T-cell (primary cell): ENCODE measurements at regions of chr17 and their contacts with region 1.

Region 1: GRCh38 chr17:51056813-51057510 is 63.7 kb downstream of the SPAG9 start:
- DNase-seq: peak in 16 of 35 experiments; percentile 6 to 61 (median 19)
- ATAC-seq: peak in 3 of 4 experiments; percentile 43 to 65 (median 44)
- H3K4me3 ChIP-seq: no peak overlapping the region
- H3K4me3 Mint-ChIP-seq: no peak overlapping the region
- H3K27ac ChIP-seq: no peak overlapping the region
- H3K27ac Mint-ChIP-seq: peak overlapping the region; percentile 12 to 73
- H3K4me1 ChIP-seq: no peaks in the 10 kb centered on the region
- H3K4me1 Mint-ChIP-seq: peaks cover 0 to 20% (median 19%) of the 10 kb centered on the region in 3 donors
- H3K27me3 ChIP-seq: no peaks in the 10 kb centered on the region
- H3K27me3 Mint-ChIP-seq: no peaks in the 10 kb centered on the region

Region 2: DNA sequence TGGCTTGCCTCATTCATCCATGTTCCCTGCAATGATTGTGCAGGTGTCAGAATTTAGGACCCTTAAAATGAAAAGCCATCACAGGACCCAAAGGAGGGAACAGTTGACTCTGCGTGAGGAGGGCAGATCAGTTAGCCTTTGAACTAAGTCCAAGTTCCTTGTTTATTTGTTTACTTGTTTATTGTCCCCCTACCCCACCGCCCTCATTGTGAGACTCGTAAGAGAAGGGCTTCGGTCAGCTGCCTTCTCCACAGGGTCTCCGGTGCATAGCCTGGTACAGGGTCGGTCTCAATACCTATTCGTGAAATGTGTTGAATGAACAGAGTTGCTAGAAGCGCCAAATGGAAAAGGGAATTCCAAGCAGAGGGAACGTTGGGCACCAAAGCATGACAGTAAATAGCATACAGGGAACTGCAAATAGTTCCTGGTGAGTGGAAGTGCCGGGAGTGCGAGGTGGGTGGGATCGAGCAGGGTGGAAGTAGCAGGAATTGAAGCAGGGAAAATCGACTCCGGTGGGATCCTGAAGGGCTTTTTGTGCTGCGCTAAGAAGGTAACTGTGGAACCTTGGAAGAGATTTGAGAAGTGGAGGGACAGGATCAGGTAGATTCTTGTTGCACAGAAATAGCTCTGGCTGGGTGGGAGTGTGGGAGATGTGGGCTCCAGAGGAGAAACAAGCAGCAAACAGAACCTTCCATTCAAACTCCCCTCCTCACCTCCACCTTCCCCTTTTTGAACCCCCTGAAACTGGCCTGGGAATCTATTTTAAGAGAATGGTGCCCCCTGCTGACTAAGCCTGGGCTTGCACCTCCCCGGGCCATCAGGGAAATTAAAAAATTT is 1361.9 kb before region 1 on chr17:
- CTCF ChIA-PET with region 1: no interaction called
- POLR2A ChIA-PET with region 1: no interaction called
- DNase-seq: peak in 34 of 35 experiments; percentile 22 to 79 (median 62)
- ATAC-seq: peak; percentile 36 to 69 (median 56)
- H3K4me3 ChIP-seq: no peak overlapping the region
- H3K4me3 Mint-ChIP-seq: peak overlapping the region in 1 of 3 donors; percentile 37
- H3K27ac ChIP-seq: peak overlapping the region; percentile 58
- H3K27ac Mint-ChIP-seq: peak overlapping the region; percentile 71 to 82
- H3K4me1 ChIP-seq: peaks cover 19 to 33% of the 10 kb centered on the region in 2 experiments
- H3K4me1 Mint-ChIP-seq: peaks cover 48 to 52% (median 50%) of the 10 kb centered on the region in 3 donors
- H3K27me3 ChIP-seq: no peaks in the 10 kb centered on the region
- H3K27me3 Mint-ChIP-seq: no peaks in the 10 kb centered on the region

Region 3: DNA sequence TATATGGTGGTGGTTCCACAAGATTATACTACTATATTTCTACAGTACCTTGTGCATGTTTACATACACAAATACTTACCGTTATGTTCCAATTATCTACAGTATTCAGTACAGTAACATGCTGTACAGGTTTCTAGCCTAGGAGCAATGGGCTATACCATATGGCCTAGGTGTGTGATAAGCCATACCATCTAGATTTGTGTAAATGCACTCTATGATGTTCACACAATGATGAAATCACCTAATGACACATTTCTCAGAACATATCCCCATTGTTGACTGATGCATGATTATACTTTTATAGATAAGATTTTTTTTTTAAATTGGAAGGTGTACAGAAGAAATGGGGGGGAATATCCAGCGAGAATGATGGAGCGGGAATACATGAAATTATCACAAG is 67.8 kb before region 1 on chr17:
- CTCF ChIA-PET with region 1: no interaction called
- POLR2A ChIA-PET with region 1: no interaction called
- DNase-seq: no peak
- ATAC-seq: no peak
- H3K4me3 ChIP-seq: no peak overlapping the region
- H3K4me3 Mint-ChIP-seq: no peak overlapping the region
- H3K27ac ChIP-seq: no peak overlapping the region
- H3K27ac Mint-ChIP-seq: no peak overlapping the region
- H3K4me1 ChIP-seq: no peaks in the 10 kb centered on the region
- H3K4me1 Mint-ChIP-seq: no peaks in the 10 kb centered on the region
- H3K27me3 ChIP-seq: no peaks in the 10 kb centered on the region
- H3K27me3 Mint-ChIP-seq: no peaks in the 10 kb centered on the region

Region 4: DNA sequence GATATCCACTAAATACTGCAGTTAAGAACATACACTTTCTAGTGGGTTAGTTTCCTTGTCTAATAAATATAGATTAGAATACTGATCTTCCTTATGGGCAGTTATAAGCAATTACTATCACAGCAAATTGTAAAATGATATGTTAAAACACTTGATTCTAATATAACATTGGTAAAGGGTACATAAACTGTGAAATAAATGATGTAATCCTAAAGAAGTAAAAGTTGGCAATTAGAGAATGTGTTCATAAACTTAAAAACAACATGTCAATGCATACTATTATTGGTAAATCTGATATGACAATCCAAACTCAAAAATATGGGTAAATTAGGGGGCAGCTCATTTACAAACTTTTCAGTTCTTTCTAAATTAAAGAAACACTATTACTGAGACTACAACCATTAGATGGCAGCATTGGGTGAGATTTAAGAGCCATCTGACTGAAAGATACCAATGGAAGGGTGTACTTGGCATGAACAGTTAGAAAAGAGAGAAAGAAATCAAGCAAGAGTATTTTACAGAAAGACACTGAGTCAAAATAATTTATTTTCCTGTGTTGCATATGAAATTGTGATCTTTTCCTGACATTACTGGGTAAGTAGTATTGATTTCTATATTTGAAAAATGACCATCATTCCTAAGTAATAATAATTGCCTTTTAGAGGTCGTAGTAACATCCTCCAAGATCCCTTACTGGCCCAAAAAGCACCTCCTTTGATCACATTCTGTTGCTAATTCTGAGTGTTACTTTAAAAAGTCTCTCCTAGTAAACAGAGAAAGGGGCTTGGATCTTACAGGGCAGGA is 55.9 kb before region 1 on chr17:
- CTCF ChIA-PET with region 1: interaction called, 8 to 75 read pairs
- POLR2A ChIA-PET with region 1: interaction called in 1 of 2 experiments, 3 read pairs
- DNase-seq: peak in 13 of 35 experiments; percentile 2 to 82 (median 20)
- ATAC-seq: peak; percentile 57 to 85 (median 77)
- H3K4me3 ChIP-seq: no peak overlapping the region
- H3K4me3 Mint-ChIP-seq: no peak overlapping the region
- H3K27ac ChIP-seq: no peak overlapping the region
- H3K27ac Mint-ChIP-seq: peak overlapping the region in 1 of 2 donors; percentile 29
- H3K4me1 ChIP-seq: no peaks in the 10 kb centered on the region
- H3K4me1 Mint-ChIP-seq: peaks cover 0 to 6% (median 4%) of the 10 kb centered on the region in 3 donors
- H3K27me3 ChIP-seq: no peaks in the 10 kb centered on the region
- H3K27me3 Mint-ChIP-seq: no peaks in the 10 kb centered on the region

Region 5: DNA sequence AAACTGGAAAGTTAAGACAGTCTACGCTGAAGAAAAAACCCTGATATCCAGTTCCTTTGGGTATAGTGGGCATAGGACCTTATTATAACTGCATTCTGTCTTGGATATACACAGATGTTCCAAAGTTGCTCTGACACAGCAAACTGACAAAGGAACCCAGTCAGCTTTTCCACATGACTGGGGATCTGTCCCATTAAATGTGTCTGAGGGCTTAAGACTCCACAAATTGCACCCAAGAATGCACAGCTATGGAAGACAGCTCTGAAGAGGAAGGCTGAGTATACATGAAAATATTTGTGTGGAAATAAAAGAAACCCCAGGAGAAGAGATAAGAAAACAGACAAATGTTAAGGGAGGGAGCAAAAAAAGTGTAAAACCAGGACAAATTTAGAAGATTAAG is 50.4 kb before region 1 on chr17:
- CTCF ChIA-PET with region 1: interaction called, 3 to 75 read pairs
- POLR2A ChIA-PET with region 1: no interaction called
- DNase-seq: no peak
- ATAC-seq: no peak
- H3K4me3 ChIP-seq: no peak overlapping the region
- H3K4me3 Mint-ChIP-seq: no peak overlapping the region
- H3K27ac ChIP-seq: no peak overlapping the region
- H3K27ac Mint-ChIP-seq: peak overlapping the region in 1 of 2 donors; percentile 1
- H3K4me1 ChIP-seq: no peaks in the 10 kb centered on the region
- H3K4me1 Mint-ChIP-seq: no peaks in the 10 kb centered on the region
- H3K27me3 ChIP-seq: no peaks in the 10 kb centered on the region
- H3K27me3 Mint-ChIP-seq: no peaks in the 10 kb centered on the region